Left cardiac atrium (tissue), 4 donors: ENCODE measurements at regions of chr19 and their contacts with region 1.

Region 1: GRCh38 chr19:40716655-40717324 is at the starts of genes COQ8B and ITPKC:
- DNase-seq: peak; percentile 100
- ATAC-seq: peak; percentile 78 to 83
- total RNA-seq, gene COQ8B: 20.1 to 32.0 TPM
- total RNA-seq, gene ITPKC: 12.4 to 17.6 TPM

Region 2: DNA sequence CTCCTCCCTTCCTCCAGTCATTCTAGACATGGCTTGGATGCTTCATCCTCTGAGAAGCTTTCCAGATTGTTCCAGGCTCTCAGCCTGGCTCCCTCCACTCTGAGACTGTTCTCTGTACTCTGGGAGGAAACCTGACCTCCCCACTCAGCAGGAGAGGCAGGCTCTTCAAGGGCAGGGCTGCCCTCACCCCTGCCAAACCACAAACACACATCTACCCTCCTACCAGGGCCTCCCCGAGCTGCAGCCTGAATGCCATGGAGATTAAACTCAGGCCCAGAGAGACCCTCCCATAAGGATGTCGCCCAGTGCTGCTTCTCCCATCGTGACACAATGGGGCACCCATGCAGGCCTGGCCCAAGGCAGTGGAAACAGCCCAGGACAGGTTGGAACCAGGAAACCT is 42.5 kb before region 1 on chr19:
- intact Hi-C with region 1: no loop called
- DNase-seq: no peak
- ATAC-seq: no peak

Region 3: DNA sequence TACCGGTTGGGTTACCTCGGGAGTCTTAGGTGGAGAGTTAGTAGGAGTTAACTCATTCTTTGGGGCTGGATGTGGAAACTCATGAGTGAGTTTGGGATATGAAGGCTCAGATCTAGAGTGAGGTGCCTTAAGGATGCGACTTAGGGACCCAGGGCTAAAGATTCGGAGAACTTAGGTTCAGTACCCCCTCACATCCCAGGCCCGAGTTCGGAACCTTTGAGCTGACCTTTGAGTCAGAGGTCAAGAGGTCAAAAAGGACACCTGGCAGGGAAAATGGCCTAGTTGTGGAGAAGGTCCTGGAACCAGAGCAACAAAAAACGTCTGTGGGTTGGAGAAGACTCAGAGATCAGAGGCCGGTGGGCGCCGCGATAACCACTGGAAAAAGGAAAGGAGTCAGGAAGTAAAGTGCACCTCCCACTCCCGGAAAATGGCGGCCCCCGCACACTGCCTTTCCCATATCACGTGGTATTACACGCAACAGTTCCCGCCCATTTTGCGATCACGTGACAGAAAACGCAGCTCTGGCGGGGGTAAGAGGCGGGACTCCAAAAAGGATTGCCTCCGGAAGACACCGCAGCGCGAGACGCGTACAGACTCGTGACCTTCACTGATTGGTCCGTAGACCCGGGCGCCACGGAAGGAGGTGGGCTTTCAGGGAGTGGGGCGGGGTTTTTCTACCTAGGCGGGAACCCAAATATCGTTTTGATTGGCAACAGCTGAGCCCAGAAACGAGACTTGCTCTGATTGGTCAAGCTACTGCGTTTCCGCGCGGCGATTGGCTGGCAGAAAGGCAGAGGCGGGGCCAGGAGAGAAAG is 33.5 kb after region 1 on chr19 and contains the start of gene ACTMAP:
- intact Hi-C with region 1: loop called in 1 of 2 experiments (anchors 5 kb)
- DNase-seq: peak; percentile 100
- ATAC-seq: peak; percentile 97
- total RNA-seq, gene ACTMAP: 4.2 to 6.2 TPM

Region 4: DNA sequence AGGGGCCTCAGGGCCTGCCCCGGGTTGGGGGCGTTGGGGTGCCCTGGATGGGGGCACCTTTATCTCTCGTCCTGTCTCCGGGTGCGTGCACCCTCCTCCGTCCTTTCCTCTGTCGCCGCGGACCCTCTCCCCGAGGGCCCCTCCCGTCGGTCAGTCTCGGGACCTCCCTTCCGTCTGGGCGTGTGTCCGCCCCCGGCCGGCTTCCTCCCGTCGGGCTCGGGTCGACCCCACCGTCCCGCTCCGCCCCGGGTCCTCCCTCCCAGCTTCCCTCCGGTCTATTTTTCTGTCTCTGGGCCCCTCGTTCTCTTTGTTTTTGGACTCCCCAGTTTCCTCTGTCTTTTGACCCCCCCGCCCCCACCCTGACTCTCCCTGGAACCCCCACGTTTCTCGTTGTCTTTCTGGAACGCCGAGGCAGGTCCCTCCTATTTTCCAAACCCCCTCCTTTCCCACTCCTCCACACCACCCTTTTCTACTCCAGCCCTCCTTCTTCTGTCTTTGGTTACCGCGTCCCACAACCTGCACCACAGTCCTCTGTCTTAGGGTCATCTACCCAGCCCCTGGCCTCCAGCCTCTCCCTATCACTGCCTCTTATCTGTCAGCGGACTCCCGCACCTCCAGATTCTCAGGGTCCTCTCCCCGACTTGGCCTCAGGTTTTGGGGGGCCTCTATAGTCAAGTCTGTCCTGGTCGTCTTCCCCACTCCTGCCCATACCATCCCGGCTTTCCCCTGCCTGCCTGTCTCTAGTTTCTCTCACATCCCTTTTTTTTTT is 83.0 kb after region 1 on chr19:
- intact Hi-C with region 1: loop called in 1 of 2 experiments (anchors 5 kb)
- DNase-seq: peak; percentile 82
- ATAC-seq: peak; percentile 13 to 28